Heart left ventricle (tissue), 16 donors: ENCODE measurements at regions of chr10 and their contacts with region 1.

Region 1: GRCh38 chr10:91088300-91089140 is 131.9 kb upstream of the PCGF5 start:
- DNase-seq: peak in 3 of 5 donors; percentile 36 to 54 (median 47)
- ATAC-seq: peak; percentile 94 to 96 (median 95)
- H3K4me3 ChIP-seq: no peak overlapping the region
- H3K27ac ChIP-seq: peak overlapping the region; percentile 41 to 92 (median 72)
- H3K4me1 ChIP-seq: peaks cover 0 to 35% (median 6%) of the 10 kb centered on the region in 12 donors
- H3K27me3 ChIP-seq: no peaks in the 10 kb centered on the region
- CTCF ChIP-seq: peak in 4 of 12 donors; percentile 10 to 46 (median 24)
- POLR2A ChIP-seq: no peak

Region 2: DNA sequence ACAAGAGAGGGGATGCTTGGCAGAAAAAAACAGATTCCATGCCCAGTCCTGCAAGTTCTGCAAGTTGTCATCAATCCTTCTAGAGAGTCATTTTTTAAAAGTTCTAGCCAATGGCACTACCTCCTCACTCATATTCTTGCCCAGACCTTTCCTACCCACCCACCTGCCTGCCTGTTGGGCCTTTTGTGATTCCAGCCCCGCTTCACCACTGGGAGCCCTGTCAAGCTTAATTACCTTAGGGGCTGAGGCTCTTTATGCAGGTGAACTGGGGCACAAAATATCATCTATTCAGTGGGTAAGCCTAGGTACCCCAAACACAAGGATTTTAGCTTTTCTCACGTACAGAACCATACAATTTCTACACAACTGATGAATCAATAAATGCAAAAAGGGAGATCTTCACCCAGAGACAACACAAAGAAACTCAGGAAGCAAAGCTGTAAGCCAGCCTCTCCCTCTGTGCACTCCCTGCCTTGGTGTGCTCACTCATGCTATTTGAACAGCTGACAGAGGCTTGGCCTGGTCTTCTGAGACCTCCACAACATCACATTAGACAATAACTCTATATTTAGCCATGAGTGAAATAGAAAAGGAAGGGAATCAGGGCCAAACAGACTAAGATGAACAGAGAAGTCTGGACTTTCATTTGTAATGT is 453.3 kb before region 1 on chr10:
- intact Hi-C with region 1: no loop called
- DNase-seq: peak in 2 of 5 donors; percentile 10 to 23
- ATAC-seq: peak in 3 of 4 donors; percentile 31 to 65 (median 55)
- H3K4me3 ChIP-seq: no peak overlapping the region
- H3K27ac ChIP-seq: no peak overlapping the region
- H3K4me1 ChIP-seq: peaks cover 0 to 8% (median 0%) of the 10 kb centered on the region in 12 donors
- H3K27me3 ChIP-seq: no peaks in the 10 kb centered on the region
- CTCF ChIP-seq: no peak
- POLR2A ChIP-seq: no peak

Region 3: GRCh38 chr10:90912174-90912573 is 176.3 kb before region 1 on chr10:
- intact Hi-C with region 1: loop called in 1 of 10 experiments (anchors 10 kb)
- DNase-seq: no peak
- ATAC-seq: peak in 1 of 4 donors; percentile 2
- H3K4me3 ChIP-seq: no peak overlapping the region
- H3K27ac ChIP-seq: peak overlapping the region in 7 of 12 donors; percentile 1 to 36 (median 24)
- H3K4me1 ChIP-seq: peaks cover 0 to 6% (median 0%) of the 10 kb centered on the region in 12 donors
- H3K27me3 ChIP-seq: no peaks in the 10 kb centered on the region
- CTCF ChIP-seq: no peak
- POLR2A ChIP-seq: peak in 1 of 2 donors; percentile 30

Region 4: DNA sequence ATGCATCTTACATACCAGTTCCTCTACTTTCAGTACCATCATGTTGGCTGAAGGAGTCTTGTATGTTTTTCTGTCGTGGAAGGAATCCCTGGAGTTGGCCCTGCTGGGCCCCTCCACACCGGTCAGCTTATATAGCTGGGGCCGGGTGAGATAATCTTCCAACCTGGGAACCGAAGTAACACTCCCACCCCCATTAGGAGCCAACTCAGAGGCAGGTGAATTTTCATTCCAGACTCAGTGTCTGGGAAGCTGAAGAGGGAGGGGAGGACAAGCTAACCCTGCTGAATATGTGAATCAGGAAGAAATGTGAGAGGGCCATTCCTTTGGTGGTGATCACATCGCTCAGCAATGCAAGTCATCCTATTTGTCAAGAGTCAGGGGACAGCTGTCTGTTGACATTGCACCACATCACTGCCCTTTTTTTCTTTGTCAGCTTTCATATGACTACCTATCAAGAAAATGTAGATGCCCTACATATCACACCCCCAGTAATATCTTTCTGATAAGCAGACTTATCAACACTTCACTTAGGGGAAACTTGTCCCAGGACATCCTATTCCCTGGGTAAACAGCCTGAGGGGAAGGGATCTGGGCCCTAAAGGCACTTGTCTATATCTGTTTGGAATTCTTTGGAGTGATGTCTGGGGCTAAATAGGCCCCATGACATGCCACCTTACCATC is 167.4 kb before region 1 on chr10 and contains the start of gene ANKRD1:
- intact Hi-C with region 1: loop called in 3 of 10 experiments (anchors 10 kb)
- DNase-seq: peak in 4 of 5 donors; percentile 69 to 79 (median 70)
- ATAC-seq: peak; percentile 73 to 94 (median 90)
- H3K4me3 ChIP-seq: peak within 1 kb of the TSS; percentile 11 to 67 (median 57)
- H3K27ac ChIP-seq: peak within 1 kb of the TSS; percentile 72 to 97 (median 87)
- H3K4me1 ChIP-seq: peaks cover 0 to 11% (median 3%) of the 10 kb centered on the region in 12 donors
- H3K27me3 ChIP-seq: no peaks in the 10 kb centered on the region
- CTCF ChIP-seq: no peak
- POLR2A ChIP-seq: peak in 1 of 2 donors; percentile 58
- total RNA-seq, gene ANKRD1: 1,315 to 6,714 (median 4,181) TPM

Region 5: DNA sequence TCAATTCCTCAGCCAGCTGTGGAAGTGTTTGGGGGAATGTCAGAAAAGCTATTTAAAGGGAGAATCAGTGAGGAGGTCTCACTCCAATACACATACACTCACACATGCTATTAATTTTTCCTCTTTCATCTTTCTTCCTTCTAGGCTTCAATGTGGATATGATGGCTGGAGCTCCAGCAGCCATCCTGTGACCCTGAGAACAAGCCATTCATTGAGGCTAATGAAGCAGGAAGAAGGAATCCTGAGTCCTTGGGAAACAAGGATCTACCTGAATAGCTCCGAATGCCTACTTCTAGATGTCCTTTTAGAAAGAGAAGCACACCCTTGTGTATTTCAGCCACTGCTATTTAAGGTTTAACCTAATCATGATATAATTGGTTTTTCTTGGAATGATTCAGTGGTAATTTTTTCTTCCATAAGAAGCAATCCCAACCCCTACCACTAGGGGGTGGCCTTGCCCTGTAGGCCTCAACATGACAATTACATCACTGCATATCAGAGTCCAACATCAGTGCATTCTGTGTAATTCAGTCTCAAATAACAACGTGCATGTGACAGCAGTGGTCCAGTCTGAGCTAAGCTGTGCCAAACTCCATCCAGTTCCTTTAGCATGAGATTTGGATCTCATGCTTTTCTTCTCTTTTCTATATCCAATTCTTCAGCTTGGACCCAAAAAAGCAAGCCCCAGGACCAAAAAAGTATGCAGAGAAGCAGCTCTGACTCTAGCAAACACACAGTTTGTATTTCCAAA is 82.3 kb before region 1 on chr10:
- intact Hi-C with region 1: loop called in 1 of 10 experiments (anchors 10 kb)
- DNase-seq: peak in 4 of 5 donors; percentile 33 to 58 (median 44)
- ATAC-seq: peak; percentile 53 to 85 (median 71)
- H3K4me3 ChIP-seq: no peak overlapping the region
- H3K27ac ChIP-seq: peak overlapping the region in 9 of 12 donors; percentile 6 to 53 (median 36)
- H3K4me1 ChIP-seq: peaks cover 0 to 13% (median 8%) of the 10 kb centered on the region in 12 donors
- H3K27me3 ChIP-seq: no peaks in the 10 kb centered on the region
- CTCF ChIP-seq: peak; percentile 87 to 98 (median 94)
- POLR2A ChIP-seq: no peak

Region 6: GRCh38 chr10:91043173-91043910 is 45.2 kb before region 1 on chr10:
- intact Hi-C with region 1: loop called in 1 of 10 experiments (anchors 5 kb)
- DNase-seq: peak in 1 of 5 donors; percentile 10
- ATAC-seq: peak; percentile 79 to 91 (median 89)
- H3K4me3 ChIP-seq: no peak overlapping the region
- H3K27ac ChIP-seq: no peak overlapping the region
- H3K4me1 ChIP-seq: peaks cover 0 to 21% (median 0%) of the 10 kb centered on the region in 12 donors
- H3K27me3 ChIP-seq: no peaks in the 10 kb centered on the region
- CTCF ChIP-seq: peak; percentile 22 to 66 (median 56)
- POLR2A ChIP-seq: no peak

Region 7: DNA sequence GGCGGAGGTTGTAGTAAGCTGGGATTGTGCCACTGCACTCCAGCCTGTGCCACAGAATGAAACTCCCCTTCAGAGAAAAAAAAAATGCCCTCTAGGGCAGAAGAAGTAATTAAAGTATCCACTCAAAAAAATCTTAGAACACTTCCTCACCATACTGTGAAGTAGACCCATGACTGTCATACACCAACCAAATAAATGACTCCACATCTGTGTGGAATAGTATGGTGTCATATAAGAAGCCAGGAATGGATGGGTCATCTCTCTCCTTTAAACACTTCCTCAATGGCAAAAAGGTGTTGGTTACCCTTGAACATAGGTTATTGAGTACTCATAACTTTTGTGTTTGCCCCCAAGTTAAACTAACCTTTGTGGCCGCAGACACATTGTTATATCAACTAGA is 83.8 kb after region 1 on chr10:
- intact Hi-C with region 1: no loop called
- DNase-seq: no peak
- ATAC-seq: no peak
- H3K4me3 ChIP-seq: no peak overlapping the region
- H3K27ac ChIP-seq: no peak overlapping the region
- H3K4me1 ChIP-seq: peaks cover 0 to 9% (median 0%) of the 10 kb centered on the region in 12 donors
- H3K27me3 ChIP-seq: no peaks in the 10 kb centered on the region
- CTCF ChIP-seq: no peak
- POLR2A ChIP-seq: no peak

Region 8: GRCh38 chr10:91238191-91238590 is 149.7 kb after region 1 on chr10:
- intact Hi-C with region 1: loop called in 1 of 10 experiments (anchors 10 kb)
- DNase-seq: no peak
- ATAC-seq: no peak
- H3K4me3 ChIP-seq: no peak overlapping the region
- H3K27ac ChIP-seq: no peak overlapping the region
- H3K4me1 ChIP-seq: peaks cover 0 to 19% (median 2%) of the 10 kb centered on the region in 12 donors
- H3K27me3 ChIP-seq: no peaks in the 10 kb centered on the region
- CTCF ChIP-seq: no peak
- POLR2A ChIP-seq: no peak

Region 9: GRCh38 chr10:91251430-91252056 is 163.0 kb after region 1 on chr10:
- intact Hi-C with region 1: loop called in 7 of 10 experiments (anchors 2 to 10 kb)
- DNase-seq: peak in 4 of 5 donors; percentile 28 to 52 (median 40)
- ATAC-seq: peak in 3 of 4 donors; percentile 63 to 78 (median 67)
- H3K4me3 ChIP-seq: no peak overlapping the region
- H3K27ac ChIP-seq: no peak overlapping the region
- H3K4me1 ChIP-seq: peaks cover 0 to 33% (median 10%) of the 10 kb centered on the region in 12 donors
- H3K27me3 ChIP-seq: no peaks in the 10 kb centered on the region
- CTCF ChIP-seq: peak; percentile 88 to 97 (median 94)
- POLR2A ChIP-seq: no peak